Lower leg skin (tissue), 4 donors: ENCODE measurements at regions of chr2 and their contacts with region 1.

Region 1: DNA sequence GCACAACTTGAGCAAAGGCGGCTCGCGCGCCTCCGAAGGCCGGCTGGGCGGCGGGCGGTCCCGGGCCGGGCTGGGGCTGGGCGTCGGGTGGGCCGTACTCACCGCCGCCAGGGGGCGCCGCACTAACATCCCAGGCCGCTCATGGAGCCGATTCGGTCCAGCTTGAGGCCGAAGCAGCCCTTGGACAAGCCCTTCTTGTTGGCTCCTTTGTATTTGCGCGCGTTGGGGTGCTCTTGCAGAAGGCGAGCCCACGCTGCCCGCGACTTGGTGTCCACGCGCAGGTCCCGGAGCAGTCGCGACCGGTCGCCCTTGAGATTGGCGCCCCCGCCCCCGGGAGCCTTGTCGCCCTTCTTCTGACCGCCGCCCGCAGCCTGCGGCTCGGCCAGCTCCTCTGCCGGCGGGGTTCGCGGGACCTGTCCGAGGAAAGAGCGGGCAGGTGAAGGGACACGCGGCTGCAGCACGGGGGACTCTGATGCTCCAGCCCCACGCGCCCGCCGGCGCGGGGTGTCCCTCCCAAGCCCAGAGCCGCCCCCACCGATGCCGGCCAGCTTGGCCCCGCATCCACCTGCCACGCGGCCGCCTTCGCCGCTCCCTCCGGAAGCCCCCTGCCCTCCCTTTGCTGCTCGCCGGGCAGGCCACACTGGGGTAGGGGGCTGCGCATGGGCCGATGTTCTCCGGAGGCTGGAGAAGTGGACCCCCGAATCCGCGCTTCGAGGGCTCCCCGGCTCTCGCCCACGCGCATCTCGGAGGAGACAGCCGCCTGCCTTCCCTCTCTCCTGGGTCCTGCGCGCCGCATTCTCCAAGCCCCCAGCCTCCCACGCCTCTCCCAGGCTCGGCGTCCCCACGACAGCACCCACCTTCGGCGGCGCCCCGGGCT is 655 bp downstream of the NPPC start:
- DNase-seq: peak; percentile 50 to 95
- H3K4me3 ChIP-seq: peak overlapping the region; percentile 21
- CTCF ChIP-seq: no peak
- POLR2A ChIP-seq: no peak

Region 2: GRCh38 chr2:232137356-232138147 is 212.0 kb after region 1 on chr2:
- intact Hi-C with region 1: loop called (anchors 5 kb)
- DNase-seq: no peak
- H3K4me3 ChIP-seq: no peak overlapping the region
- CTCF ChIP-seq: no peak
- POLR2A ChIP-seq: no peak

Region 3: DNA sequence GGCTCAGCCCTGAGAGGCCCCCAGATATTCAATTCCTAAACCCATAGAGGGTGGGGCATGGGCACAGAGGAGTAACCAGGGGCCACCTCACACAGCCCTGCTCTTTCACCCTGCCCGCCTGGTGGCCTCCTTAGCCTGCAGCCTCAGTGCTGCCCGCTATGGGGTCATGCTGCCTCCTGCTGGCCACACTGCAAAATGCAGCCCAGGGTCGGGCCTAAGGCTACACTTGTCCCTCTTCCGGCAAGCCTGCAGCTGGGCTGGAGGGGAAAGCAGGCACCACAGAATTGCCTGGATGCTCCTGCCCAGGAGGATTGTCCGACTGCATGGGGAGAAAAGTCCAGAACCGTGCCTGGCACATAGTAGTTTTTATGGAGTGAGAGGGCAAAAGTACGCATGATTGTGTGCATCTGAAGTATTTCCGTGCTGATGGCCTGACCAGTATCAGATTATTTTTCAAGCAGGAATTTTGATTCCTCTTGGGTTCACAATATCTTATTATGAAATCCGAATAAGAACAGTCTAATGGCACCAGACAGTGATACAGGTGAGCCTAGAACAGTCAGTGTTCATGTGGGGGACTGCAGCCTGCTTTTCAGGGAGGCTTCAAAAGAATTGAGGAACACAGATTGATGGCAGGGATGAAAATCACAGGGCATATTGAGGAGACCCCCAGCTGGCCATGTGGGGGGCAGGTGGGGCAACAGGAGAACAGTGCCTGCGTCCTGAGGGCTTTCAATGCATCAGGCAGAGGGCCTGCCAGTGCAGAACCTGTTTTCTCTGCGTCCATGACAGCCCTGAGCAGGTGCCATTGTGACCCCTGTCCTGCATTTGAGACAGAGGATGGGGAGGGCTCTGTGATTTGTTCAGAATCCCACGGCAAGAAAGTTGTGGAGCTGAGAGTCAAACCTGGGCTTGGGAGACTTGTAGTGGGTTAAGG is 401.8 kb after region 1 on chr2:
- intact Hi-C with region 1: loop called (anchors 5 kb)
- DNase-seq: peak in 1 of 2 donors; percentile 90
- H3K4me3 ChIP-seq: no peak overlapping the region
- CTCF ChIP-seq: peak in 1 of 3 donors; percentile 82
- POLR2A ChIP-seq: no peak